ENCODE measurements at regions of chr12 and their contacts with region 1.

Region 1: DNA sequence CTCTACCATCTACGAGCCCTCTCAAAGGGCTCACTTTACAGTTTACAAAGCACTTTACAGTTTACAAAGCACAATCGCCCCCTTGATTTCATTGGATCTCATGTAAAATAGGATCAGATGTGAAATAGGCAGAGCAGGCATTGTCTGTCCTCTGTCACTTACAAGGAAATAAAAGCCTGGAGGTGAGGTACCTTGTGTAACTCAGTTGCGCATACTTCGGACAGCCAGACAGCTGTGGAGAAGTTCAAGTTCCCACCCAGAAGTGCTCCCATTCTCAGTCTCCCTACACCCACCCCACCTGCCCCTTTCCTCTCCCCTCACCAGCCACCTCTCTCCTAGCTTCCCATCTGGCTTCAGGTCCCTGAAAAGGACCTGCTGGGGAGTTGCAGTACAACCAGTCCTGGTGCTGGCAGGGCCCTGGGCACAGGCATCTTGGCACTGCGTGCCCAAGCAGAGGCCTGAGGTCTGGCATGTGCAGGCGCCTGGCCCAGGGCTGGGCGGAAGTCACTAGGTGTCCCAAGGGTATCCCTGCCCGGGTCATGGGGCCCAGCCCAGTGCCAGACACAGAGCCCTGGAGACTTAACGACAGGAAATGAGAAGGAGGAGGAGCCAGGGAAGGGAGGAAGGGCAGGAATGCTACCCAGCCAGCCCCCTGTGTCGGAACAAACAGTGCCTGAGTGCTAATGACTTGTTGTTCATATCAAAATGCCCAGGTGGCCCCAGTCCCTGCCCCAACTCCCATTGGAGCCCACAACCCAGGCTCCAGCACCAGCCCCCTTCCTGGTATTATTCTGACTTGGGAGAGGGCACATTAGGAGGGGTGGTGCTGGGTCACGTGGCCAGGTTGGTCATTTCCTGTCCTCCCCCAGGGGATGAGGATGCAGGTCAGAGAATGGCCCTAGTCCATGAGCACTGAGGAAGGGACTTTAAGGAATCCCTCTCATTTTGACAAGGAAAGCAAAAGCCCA is 5.4 kb downstream of the RAPGEF3 start:
- DNase-seq: peak; percentile 93
- ATAC-seq: peak; percentile 93

Region 2: GRCh38 chr12:47736877-47737676 is 16.2 kb before region 1 on chr12:
- intact Hi-C with region 1: loop called (anchors 1 kb)
- DNase-seq: peak; percentile 93
- ATAC-seq: peak; percentile 87

Measured in Right ventricle myocardium inferior (tissue), 1 donor.